Right ventricle myocardium inferior (tissue), 1 donor: ENCODE measurements at regions of chr10 and their contacts with region 1.

Region 1: DNA sequence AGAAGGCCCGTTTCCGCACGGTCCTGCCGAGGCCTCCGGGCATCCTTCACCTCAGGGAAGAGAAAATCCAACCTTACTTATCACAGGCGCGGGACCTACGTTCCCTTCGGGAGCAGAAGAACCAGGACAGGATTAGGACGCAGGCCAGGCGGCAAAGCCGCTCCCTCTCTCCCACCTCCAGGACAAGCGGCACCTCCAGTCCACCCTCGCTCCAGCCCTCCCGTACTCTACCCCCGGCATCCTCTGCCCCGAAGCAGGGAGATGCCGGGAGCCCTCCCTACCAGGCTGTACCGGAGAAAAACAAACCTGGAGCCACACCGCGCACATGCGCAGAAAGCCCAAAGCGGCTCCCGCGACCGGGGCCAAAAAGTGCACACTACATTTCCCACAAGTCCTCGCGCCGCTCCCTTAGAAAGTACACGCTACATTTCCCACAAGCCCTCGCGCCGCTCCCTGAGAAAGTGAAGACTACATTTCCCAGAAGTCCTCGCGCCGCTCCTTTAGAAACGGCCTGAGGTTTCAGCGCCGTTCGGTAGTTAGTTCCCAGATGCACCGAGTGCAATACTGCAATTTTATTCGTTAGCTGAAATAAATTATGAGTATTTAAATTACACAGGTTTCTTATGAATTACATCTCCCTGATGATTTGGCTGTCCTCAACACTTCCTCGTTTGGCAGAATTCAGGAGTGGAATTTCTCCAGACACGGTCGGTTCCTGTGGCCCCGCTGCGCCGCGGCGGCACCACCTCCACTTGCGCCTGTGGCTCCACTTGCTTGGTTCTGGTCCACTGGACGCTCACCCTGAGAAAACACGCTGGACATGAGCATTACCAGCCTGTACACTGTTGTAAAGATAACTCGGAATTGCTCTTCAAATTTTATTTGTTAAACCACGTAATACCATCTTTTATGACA is 85.6 kb downstream of the ZNF33B start:
- DNase-seq: peak; percentile 98
- ATAC-seq: peak; percentile 99

Region 2: GRCh38 chr10:42638055-42638820 is 85.5 kb after region 1 on chr10 and contains the start of gene ZNF33B:
- intact Hi-C with region 1: loop called (anchors 10 kb)
- DNase-seq: peak; percentile 96
- ATAC-seq: peak; percentile 99
- total RNA-seq, gene ZNF33B: 13.7 TPM